Mammary epithelial cell (primary cell): ENCODE measurements at regions of chr18 and their contacts with region 1.

Region 1: GRCh38 chr18:63578357-63578958 is 8.7 kb upstream of the SERPINB13 start:
- DNase-seq: no peak
- H3K4me3 ChIP-seq: no peak overlapping the region
- H3K27ac ChIP-seq: no peak overlapping the region
- H3K4me1 ChIP-seq: no peaks in the 10 kb centered on the region
- H3K27me3 ChIP-seq: no peaks in the 10 kb centered on the region
- CTCF ChIP-seq: peak; percentile 77 to 83

Region 2: DNA sequence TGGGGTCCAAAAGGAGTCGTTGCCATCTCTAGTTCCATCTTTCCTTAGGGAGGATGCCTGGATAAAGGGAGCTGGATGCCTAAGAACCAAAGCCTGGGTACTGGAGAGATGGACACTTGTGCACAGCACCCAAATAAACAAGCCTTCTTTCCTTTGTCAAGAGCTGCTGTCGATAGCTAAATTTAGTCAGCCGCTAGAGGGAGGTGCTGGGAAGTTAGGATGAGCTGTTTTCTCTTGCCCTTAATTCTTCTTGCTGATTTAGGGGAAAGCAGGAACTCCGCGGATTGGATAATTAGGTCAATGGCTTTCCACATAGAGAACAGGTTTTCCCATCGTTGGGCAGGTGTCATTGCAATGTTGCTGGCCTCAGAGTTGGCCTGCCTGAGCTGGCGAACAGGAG is 67.2 kb before region 1 on chr18:
- CTCF ChIA-PET with region 1: interaction called, 3 read pairs
- dilution Hi-C with region 1: no loop called
- in situ Hi-C with region 1: loop called in 1 of 2 experiments (anchors 10 kb)
- intact Hi-C with region 1: loop called (anchors 2 kb)
- DNase-seq: no peak
- H3K4me3 ChIP-seq: no peak overlapping the region
- H3K27ac ChIP-seq: no peak overlapping the region
- H3K4me1 ChIP-seq: no peaks in the 10 kb centered on the region
- H3K27me3 ChIP-seq: no peaks in the 10 kb centered on the region
- CTCF ChIP-seq: peak; percentile 71 to 84

Region 3: DNA sequence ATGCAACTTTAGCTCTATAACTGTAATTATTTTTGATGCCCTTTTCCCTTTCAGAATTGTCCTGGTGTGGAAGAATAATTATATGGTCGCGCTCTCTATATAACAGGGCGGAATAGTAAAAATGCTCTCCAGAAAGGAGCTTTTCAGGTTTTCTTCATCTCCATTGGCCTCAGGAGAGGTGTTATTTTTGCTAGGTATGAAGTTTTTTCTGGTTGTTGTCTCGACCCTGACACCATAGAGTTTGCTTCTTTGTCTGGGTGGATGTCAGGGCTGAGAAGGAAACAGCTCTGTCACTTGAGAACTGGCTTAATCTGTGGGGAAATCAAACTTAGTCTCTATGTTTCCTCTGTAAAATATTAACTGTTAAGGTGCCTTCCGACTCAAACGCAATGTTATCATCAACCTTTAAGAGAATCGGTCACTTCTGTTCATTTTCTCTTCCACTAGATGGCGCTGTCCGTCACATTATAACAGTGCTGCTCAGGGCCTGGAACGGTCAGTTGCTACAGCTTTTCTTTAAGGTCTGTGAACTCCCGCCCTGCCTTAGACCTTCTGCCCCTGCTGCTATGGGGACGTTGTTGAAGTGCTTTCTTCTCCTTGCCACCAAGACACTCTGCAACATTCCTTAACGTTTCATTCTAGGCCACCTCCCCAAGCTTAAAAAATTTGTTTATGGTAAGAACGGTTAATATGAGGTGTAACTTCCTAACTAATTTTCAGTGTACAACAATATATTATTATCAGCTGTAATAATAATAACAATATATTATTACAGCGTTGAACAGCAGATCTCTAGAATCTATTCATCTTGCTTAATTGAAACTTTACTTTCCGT is 60.1 kb before region 1 on chr18:
- CTCF ChIA-PET with region 1: no interaction called
- dilution Hi-C with region 1: no loop called
- in situ Hi-C with region 1: loop called in 1 of 2 experiments (anchors 10 kb)
- intact Hi-C with region 1: loop called (anchors 1 kb)
- DNase-seq: peak; percentile 64
- H3K4me3 ChIP-seq: no peak overlapping the region
- H3K27ac ChIP-seq: no peak overlapping the region
- H3K4me1 ChIP-seq: no peaks in the 10 kb centered on the region
- H3K27me3 ChIP-seq: no peaks in the 10 kb centered on the region
- CTCF ChIP-seq: peak; percentile 55 to 67